ENCODE measurements at regions of chr21 and their contacts with region 1.

Region 1: GRCh38 chr21:39348355-39349210 is at the start of gene HMGN1:
- DNase-seq: peak; percentile 86
- ATAC-seq: peak; percentile 80
- H3K4me3 ChIP-seq: peak within 1 kb of the TSS; percentile 94
- H3K27ac ChIP-seq: peak within 1 kb of the TSS; percentile 79
- H3K4me1 ChIP-seq: peaks cover 5% of the 10 kb centered on the region
- H3K27me3 ChIP-seq: no peaks in the 10 kb centered on the region
- CTCF ChIP-seq: peak; percentile 24; the same call in 1 of the 2 replicates
- POLR2A ChIP-seq: peak; percentile 85
- RAD21 ChIP-seq: no peak
- total RNA-seq, gene HMGN1: 55.2 and 234 TPM in 2 replicates

Region 2: GRCh38 chr21:39379986-39380891 is 31.7 kb after region 1 on chr21:
- CTCF ChIA-PET with region 1: no interaction called
- POLR2A ChIA-PET with region 1: interaction called, 3 read pairs
- dilution Hi-C with region 1: no loop called
- in situ Hi-C with region 1: no loop called
- intact Hi-C with region 1: loop called (anchors 1 kb)
- DNase-seq: peak; percentile 96
- ATAC-seq: peak; percentile 99
- H3K4me3 ChIP-seq: peak overlapping the region; percentile 71
- H3K27ac ChIP-seq: peak overlapping the region; percentile 72
- H3K4me1 ChIP-seq: peaks cover 4% of the 10 kb centered on the region; the same call in 1 of the 2 replicates
- H3K27me3 ChIP-seq: no peaks in the 10 kb centered on the region
- CTCF ChIP-seq: no peak
- POLR2A ChIP-seq: peak; percentile 92
- RAD21 ChIP-seq: no peak

Region 3: GRCh38 chr21:39388038-39388810 is 39.6 kb after region 1 on chr21:
- CTCF ChIA-PET with region 1: interaction called, 4 read pairs
- POLR2A ChIA-PET with region 1: interaction called, 3 read pairs
- dilution Hi-C with region 1: no loop called
- in situ Hi-C with region 1: no loop called
- intact Hi-C with region 1: loop called (anchors 1 kb)
- DNase-seq: peak; percentile 77
- ATAC-seq: peak; percentile 82
- H3K4me3 ChIP-seq: peak overlapping the region; percentile 56
- H3K27ac ChIP-seq: peak overlapping the region; percentile 6; the same call in 1 of the 2 replicates
- H3K4me1 ChIP-seq: peaks cover 14% of the 10 kb centered on the region
- H3K27me3 ChIP-seq: no peaks in the 10 kb centered on the region
- CTCF ChIP-seq: peak; percentile 86
- POLR2A ChIP-seq: no peak
- RAD21 ChIP-seq: peak; percentile 84

Region 4: GRCh38 chr21:40496116-40496515 is 1147.5 kb after region 1 on chr21:
- CTCF ChIA-PET with region 1: no interaction called
- POLR2A ChIA-PET with region 1: no interaction called
- dilution Hi-C with region 1: no loop called
- in situ Hi-C with region 1: no loop called
- intact Hi-C with region 1: no loop called
- DNase-seq: no peak
- ATAC-seq: no peak
- H3K4me3 ChIP-seq: no peak overlapping the region
- H3K27ac ChIP-seq: no peak overlapping the region
- H3K4me1 ChIP-seq: no peaks in the 10 kb centered on the region
- H3K27me3 ChIP-seq: no peaks in the 10 kb centered on the region
- CTCF ChIP-seq: no peak
- POLR2A ChIP-seq: no peak
- RAD21 ChIP-seq: no peak

Measured in IMR-90 (cell line).